ENCODE measurements at regions of chr13 and their contacts with region 1.

Region 1: GRCh38 chr13:78689011-78689410 is 30.1 kb upstream of the OBI1 start:
- DNase-seq: peak in 1 of 2 experiments; percentile 40
- H3K4me3 ChIP-seq: no peak overlapping the region
- H3K4me3 Mint-ChIP-seq: no peak overlapping the region
- H3K27ac Mint-ChIP-seq: no peak overlapping the region
- H3K4me1 ChIP-seq: no peaks in the 10 kb centered on the region
- H3K4me1 Mint-ChIP-seq: no peaks in the 10 kb centered on the region
- H3K27me3 ChIP-seq: no peaks in the 10 kb centered on the region
- H3K27me3 Mint-ChIP-seq: peaks cover 8% of the 10 kb centered on the region
- CTCF ChIP-seq: peak in 1 of 2 experiments; percentile 51

Region 2: GRCh38 chr13:78241278-78241919 is 447.6 kb before region 1 on chr13:
- CTCF ChIA-PET with region 1: interaction called, 3 read pairs
- POLR2A ChIA-PET with region 1: no interaction called
- intact Hi-C with region 1: loop called (anchors 1 kb)
- DNase-seq: peak; percentile 41 to 56
- H3K4me3 ChIP-seq: no peak overlapping the region
- H3K4me3 Mint-ChIP-seq: no peak overlapping the region
- H3K27ac Mint-ChIP-seq: no peak overlapping the region
- H3K4me1 ChIP-seq: no peaks in the 10 kb centered on the region
- H3K4me1 Mint-ChIP-seq: peaks cover 7% of the 10 kb centered on the region
- H3K27me3 ChIP-seq: no peaks in the 10 kb centered on the region
- H3K27me3 Mint-ChIP-seq: peaks cover 3% of the 10 kb centered on the region
- CTCF ChIP-seq: peak; percentile 80 to 86

Region 3: DNA sequence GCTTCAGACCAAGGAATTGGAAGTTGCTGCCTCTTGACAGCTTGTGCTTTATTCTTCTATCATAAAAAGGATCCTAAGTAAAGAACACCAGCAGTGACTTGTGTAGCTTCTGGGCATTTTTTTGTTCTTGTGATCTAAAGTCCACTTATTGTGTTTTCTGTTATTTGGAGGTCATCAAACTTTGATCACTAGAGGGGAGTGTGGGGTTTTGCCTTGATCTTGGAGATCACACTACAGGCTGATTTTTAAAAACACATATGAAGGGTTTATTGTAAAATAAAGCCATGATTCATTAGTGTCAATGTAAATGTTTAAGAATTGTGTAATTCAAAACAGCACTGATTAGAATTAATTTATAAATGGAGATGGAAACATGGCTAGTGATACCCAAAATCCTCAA is 441.6 kb before region 1 on chr13:
- CTCF ChIA-PET with region 1: no interaction called
- POLR2A ChIA-PET with region 1: no interaction called
- intact Hi-C with region 1: loop called (anchors 1 kb)
- DNase-seq: no peak
- H3K4me3 ChIP-seq: no peak overlapping the region
- H3K4me3 Mint-ChIP-seq: no peak overlapping the region
- H3K27ac Mint-ChIP-seq: no peak overlapping the region
- H3K4me1 ChIP-seq: no peaks in the 10 kb centered on the region
- H3K4me1 Mint-ChIP-seq: no peaks in the 10 kb centered on the region
- H3K27me3 ChIP-seq: no peaks in the 10 kb centered on the region; the same call in 1 of the 2 replicates
- H3K27me3 Mint-ChIP-seq: peaks cover 3% of the 10 kb centered on the region
- CTCF ChIP-seq: peak in 1 of 2 experiments; percentile 18

Region 4: GRCh38 chr13:78317030-78317429 is 372.0 kb before region 1 on chr13:
- CTCF ChIA-PET with region 1: no interaction called
- POLR2A ChIA-PET with region 1: no interaction called
- intact Hi-C with region 1: loop called (anchors 1 kb)
- DNase-seq: peak in 1 of 2 experiments; percentile 6
- H3K4me3 ChIP-seq: no peak overlapping the region
- H3K4me3 Mint-ChIP-seq: no peak overlapping the region
- H3K27ac Mint-ChIP-seq: no peak overlapping the region
- H3K4me1 ChIP-seq: no peaks in the 10 kb centered on the region
- H3K4me1 Mint-ChIP-seq: no peaks in the 10 kb centered on the region
- H3K27me3 ChIP-seq: no peaks in the 10 kb centered on the region
- H3K27me3 Mint-ChIP-seq: peaks cover 6% of the 10 kb centered on the region
- CTCF ChIP-seq: peak; percentile 23 to 55

Region 5: GRCh38 chr13:78709028-78709427 is 20.0 kb after region 1 on chr13:
- CTCF ChIA-PET with region 1: no interaction called
- POLR2A ChIA-PET with region 1: no interaction called
- intact Hi-C with region 1: no loop called
- DNase-seq: no peak
- H3K4me3 ChIP-seq: no peak overlapping the region
- H3K4me3 Mint-ChIP-seq: no peak overlapping the region
- H3K27ac Mint-ChIP-seq: no peak overlapping the region
- H3K4me1 ChIP-seq: no peaks in the 10 kb centered on the region; the same call in 1 of the 2 replicates
- H3K4me1 Mint-ChIP-seq: peaks cover 16% of the 10 kb centered on the region
- H3K27me3 ChIP-seq: no peaks in the 10 kb centered on the region
- H3K27me3 Mint-ChIP-seq: no peaks in the 10 kb centered on the region
- CTCF ChIP-seq: no peak